MCF 10A (cell line): ENCODE measurements at regions of chr19 and their contacts with region 1.

Region 1: DNA sequence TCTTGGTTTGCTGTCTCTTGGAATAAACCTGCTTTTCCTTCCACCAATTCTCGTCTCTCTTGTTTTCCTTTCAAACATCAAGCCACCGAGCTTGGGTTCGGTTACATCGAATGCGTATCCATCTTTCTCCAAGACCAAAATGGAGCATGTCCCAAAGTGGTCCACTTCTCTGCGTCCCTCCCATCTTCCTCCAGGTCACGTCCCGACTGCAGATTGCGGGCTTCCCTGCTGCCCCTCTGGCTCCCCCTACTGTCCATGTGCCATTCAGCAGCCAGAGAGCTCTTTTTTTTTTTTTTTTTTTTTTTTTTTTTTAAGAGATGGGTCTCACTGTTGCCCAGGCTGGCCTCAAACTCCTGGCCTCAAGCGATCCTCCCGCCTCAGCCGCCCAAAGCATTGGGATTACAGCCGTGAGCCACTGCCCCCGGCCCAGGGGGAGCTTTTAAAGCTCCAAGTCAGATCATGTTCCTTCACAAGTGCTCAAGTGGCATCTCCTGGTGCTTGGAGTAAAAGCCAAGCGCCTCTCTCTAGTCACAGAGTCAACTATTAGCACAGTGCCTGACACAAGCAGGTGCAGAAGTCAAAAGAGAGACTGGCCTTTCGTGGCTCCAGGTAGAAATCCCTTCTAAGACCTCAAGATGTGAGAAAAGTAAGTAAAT is 10.0 kb downstream of the COL5A3 start:
- DNase-seq: peak; percentile 69
- H3K4me3 Mint-ChIP-seq: no peak overlapping the region
- H3K27ac Mint-ChIP-seq: no peak overlapping the region
- H3K4me1 Mint-ChIP-seq: peaks cover 12% of the 10 kb centered on the region
- H3K27me3 Mint-ChIP-seq: peaks cover 46% of the 10 kb centered on the region
- CTCF ChIP-seq: peak; percentile 70

Region 2: DNA sequence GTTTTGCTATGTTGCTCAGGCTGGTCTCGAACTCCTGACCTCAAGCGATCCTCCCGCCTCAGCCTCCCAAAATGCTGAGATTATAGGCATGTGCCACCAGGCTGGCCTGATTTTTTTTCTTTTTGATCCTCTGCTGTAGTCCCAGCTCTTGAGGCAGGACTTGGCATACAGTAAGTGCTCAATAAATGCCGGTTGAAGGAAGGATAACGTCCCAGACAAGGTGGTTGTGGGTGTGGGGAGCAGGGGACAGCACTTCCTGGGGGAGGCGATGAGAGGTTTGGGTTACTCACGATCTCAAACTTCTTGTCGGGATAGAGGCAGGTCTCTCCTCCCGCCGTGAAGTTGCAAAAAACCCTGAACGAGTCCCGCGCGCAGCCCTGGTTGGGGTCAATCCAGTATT is 34.3 kb before region 1 on chr19:
- CTCF ChIA-PET with region 1: interaction called, 10 read pairs
- POLR2A ChIA-PET with region 1: no interaction called
- intact Hi-C with region 1: no loop called
- DNase-seq: no peak
- H3K4me3 Mint-ChIP-seq: no peak overlapping the region
- H3K27ac Mint-ChIP-seq: no peak overlapping the region
- H3K4me1 Mint-ChIP-seq: peaks cover 5% of the 10 kb centered on the region
- H3K27me3 Mint-ChIP-seq: peaks cover 28% of the 10 kb centered on the region
- CTCF ChIP-seq: no peak

Region 3: DNA sequence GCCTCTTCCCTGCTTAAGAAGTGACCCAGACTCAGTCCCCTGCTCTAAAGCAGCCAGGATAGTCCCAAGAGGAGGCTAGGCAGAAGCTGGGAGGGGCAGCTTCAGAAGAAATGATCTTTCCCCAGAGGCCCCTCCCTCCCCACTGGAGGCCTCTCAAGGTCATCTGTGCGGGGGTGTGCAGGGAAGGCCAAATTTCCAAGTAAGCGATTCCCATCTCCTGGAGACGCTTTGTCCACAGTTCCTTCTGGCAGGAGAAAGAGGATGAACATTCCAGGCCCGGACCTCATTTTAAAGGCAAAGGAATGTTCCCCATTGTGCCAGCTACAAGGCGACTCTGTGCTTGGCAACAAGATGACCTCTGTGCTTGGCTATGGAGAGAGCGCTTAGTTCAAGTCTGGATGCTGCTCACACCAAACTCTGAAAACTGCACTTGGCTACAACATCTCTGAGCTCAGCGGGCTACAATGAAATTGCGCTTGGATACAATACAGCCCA is 13.5 kb before region 1 on chr19:
- CTCF ChIA-PET with region 1: interaction called, 24 read pairs
- POLR2A ChIA-PET with region 1: no interaction called
- intact Hi-C with region 1: no loop called
- DNase-seq: no peak
- H3K4me3 Mint-ChIP-seq: no peak overlapping the region
- H3K27ac Mint-ChIP-seq: no peak overlapping the region
- H3K4me1 Mint-ChIP-seq: no peaks in the 10 kb centered on the region
- H3K27me3 Mint-ChIP-seq: peaks cover 23% of the 10 kb centered on the region
- CTCF ChIP-seq: no peak

Region 4: GRCh38 chr19:10027158-10027693 is 26.9 kb after region 1 on chr19:
- CTCF ChIA-PET with region 1: interaction called, 14 read pairs
- POLR2A ChIA-PET with region 1: no interaction called
- intact Hi-C with region 1: loop called (anchors 1 kb)
- DNase-seq: peak; percentile 15
- H3K4me3 Mint-ChIP-seq: no peak overlapping the region
- H3K27ac Mint-ChIP-seq: no peak overlapping the region
- H3K4me1 Mint-ChIP-seq: no peaks in the 10 kb centered on the region
- H3K27me3 Mint-ChIP-seq: peaks cover 16% of the 10 kb centered on the region
- CTCF ChIP-seq: no peak